Aorta (tissue), 5 donors: ENCODE measurements at regions of chr5 and their contacts with region 1.

Region 1: GRCh38 chr5:139651853-139652787 is 4.0 kb downstream of the CXXC5 start:
- DNase-seq: peak; percentile 84 to 94
- ATAC-seq: peak; percentile 30
- H3K4me3 ChIP-seq: no peak overlapping the region
- H3K27ac ChIP-seq: peak overlapping the region; percentile 53 to 83
- H3K4me1 ChIP-seq: peaks cover 0 to 1% of the 10 kb centered on the region in 2 donors
- H3K27me3 ChIP-seq: no peaks in the 10 kb centered on the region

Region 2: GRCh38 chr5:139690064-139690802 is 38.1 kb after region 1 on chr5:
- intact Hi-C with region 1: loop called in 1 of 2 experiments (anchors 5 kb)
- DNase-seq: peak; percentile 71 to 90
- ATAC-seq: peak; percentile 15
- H3K4me3 ChIP-seq: no peak overlapping the region
- H3K27ac ChIP-seq: no peak overlapping the region
- H3K4me1 ChIP-seq: no peaks in the 10 kb centered on the region
- H3K27me3 ChIP-seq: no peaks in the 10 kb centered on the region

Region 3: DNA sequence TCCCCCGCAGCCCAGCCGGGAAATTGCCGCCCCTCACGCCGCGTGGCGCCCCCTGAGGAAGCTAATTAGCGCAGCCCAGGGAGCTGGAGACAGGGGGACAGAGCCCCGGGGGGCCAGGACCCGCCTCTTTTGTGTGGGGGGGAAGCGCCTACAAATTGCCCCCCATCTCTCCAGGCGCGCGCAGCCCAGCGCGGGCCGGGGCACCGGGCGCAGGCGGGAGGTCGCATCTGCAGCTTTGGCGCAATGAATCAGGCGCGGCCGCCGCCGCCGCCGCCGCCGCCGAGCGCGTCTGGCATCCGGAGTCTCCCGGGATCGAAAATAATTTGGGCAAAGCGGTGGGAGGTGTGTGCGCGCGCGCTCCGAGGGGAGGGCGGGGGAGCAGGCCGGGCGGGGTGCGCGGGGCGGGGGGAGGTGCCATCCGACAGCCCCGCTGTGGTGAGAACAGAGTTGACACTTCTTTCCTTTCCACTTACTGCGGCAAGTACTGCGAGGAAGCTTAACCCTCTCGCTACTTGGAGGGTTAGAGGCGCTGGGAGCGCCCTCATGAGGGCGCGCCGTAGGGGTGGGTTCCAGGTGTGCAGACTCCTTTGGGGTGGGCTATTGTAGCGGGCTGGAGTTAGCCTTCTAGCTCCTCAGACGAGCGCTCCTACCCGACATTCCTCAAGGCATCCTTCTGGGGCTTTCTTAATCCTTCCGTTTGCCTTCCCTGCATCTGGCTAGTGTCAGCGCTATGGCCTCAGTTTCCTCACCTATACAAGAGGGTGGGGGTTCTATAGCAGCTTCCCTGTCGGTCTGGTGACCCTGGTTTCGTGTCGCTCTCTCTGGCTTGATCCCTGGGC is 59.2 kb after region 1 on chr5:
- intact Hi-C with region 1: loop called (anchors 2 to 5 kb)
- DNase-seq: peak in 1 of 2 donors; percentile 90
- ATAC-seq: peak; percentile 53
- H3K4me3 ChIP-seq: peak overlapping the region; percentile 2 to 60
- H3K27ac ChIP-seq: peak overlapping the region in 1 of 2 donors; percentile 2
- H3K4me1 ChIP-seq: no peaks in the 10 kb centered on the region
- H3K27me3 ChIP-seq: no peaks in the 10 kb centered on the region

Region 4: DNA sequence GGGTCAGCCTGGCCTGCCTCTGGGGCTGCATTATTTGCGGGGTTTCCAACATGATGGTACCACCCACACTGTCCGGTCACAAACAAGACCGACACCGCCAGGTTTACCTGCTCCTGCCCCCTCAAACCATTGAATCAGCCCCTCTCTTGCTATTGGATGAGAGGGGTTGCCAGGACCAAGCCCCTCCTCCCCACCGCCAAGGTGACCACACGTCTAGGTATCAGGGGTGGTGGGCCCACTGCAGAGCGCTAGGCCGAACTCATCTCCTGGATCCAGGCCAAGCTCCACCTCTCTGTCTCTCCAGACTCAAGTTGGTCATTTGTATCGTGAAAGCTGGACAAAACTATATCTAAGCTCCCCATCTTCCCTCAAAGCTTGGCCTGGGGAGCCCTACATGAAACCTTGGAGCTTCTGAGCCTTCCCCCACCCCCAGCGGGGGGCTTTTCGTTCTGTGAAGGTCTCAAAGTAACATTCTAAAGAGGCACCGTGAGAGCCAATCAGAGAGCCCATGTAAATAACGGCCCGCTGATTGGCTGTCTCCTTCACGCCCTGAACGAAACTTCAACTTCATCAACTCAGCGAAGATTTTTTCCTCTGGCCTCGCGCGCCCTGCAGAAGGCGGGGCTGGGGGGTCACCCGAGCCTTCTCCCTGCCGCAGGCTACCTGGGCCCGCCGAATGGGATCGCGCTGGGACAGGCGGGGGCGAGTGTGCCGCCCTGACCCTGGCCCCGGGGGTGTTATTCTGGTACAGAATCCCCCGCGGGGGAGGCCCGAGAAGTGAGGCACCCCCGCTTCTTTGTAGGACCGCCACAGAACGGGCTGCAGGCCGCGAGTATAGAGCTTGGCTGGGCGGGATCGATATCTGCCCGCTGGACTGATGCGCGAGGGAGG is 93.9 kb after region 1 on chr5:
- intact Hi-C with region 1: loop called in 1 of 2 experiments (anchors 5 kb)
- DNase-seq: peak; percentile 79 to 87
- ATAC-seq: peak; percentile 77
- H3K4me3 ChIP-seq: peak overlapping the region; percentile 18 to 22
- H3K27ac ChIP-seq: peak overlapping the region in 1 of 2 donors; percentile 4
- H3K4me1 ChIP-seq: no peaks in the 10 kb centered on the region
- H3K27me3 ChIP-seq: no peaks in the 10 kb centered on the region